Head of caudate nucleus (tissue), 42 donors: ENCODE measurements at regions of chrX and their contacts with region 1.

Region 1: GRCh38 chrX:57821703-57822375 is 88.4 kb downstream of the ZXDA start:
- DNase-seq: peak in 23 of 42 donors; percentile 1 to 75 (median 38)

Region 2: GRCh38 chrX:57929373-57929772 is 107.5 kb after region 1 on chrX:
- intact Hi-C with region 1: loop called (anchors 10 kb)
- DNase-seq: peak in 4 of 42 donors; percentile 2 to 48 (median 39)